ENCODE measurements at regions of chr2 and their contacts with region 1.

Region 1: GRCh38 chr2:186503848-186504606 is 18.0 kb downstream of the ZC3H15 start:
- DNase-seq: no peak
- ATAC-seq: peak; percentile 49
- H3K4me3 ChIP-seq: no peak overlapping the region
- H3K4me1 ChIP-seq: no peaks in the 10 kb centered on the region
- CTCF ChIP-seq: peak; percentile 21

Region 2: GRCh38 chr2:186641807-186642321 is 137.8 kb after region 1 on chr2:
- intact Hi-C with region 1: loop called (anchors 5 kb)
- DNase-seq: peak in 1 of 3 donors; percentile 66
- ATAC-seq: peak; percentile 83
- H3K4me3 ChIP-seq: no peak overlapping the region
- H3K4me1 ChIP-seq: no peaks in the 10 kb centered on the region
- CTCF ChIP-seq: peak; percentile 20

Measured in mucosa of descending colon (tissue), 3 donors.